OCI-LY7 (cell line): ENCODE measurements at regions of chr19 and their contacts with region 1.

Region 1: GRCh38 chr19:46392243-46392801 is 21.0 kb downstream of the CCDC8 start:
- DNase-seq: no peak
- H3K4me3 ChIP-seq: no peak overlapping the region
- H3K27ac ChIP-seq: no peak overlapping the region
- H3K4me1 ChIP-seq: no peaks in the 10 kb centered on the region
- CTCF ChIP-seq: no peak

Region 2: DNA sequence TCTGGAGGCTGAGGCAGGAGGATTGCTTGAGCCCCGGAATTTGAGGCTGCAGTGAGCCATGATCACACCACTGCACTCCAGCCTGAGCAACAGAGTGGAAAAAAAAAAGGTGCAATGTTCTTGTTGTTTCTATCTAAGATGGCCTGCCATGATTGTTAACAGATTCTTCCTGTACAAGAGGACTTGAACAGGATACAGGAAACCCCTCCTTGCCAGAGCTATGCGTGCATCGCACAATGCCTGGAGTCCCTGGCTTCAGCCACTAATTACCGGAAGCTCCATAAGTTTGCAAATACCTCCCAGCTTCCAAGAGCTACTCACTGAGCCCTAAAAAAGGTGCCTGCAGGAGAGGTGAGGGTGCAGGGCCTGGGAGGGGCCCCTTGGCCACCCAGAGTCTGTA is 108.6 kb before region 1 on chr19:
- CTCF ChIA-PET with region 1: no interaction called
- POLR2A ChIA-PET with region 1: no interaction called
- intact Hi-C with region 1: loop called (anchors 2 kb)
- DNase-seq: no peak
- H3K4me3 ChIP-seq: no peak overlapping the region
- H3K27ac ChIP-seq: no peak overlapping the region
- H3K4me1 ChIP-seq: no peaks in the 10 kb centered on the region
- CTCF ChIP-seq: no peak

Region 3: GRCh38 chr19:46346821-46347571 is 45.3 kb before region 1 on chr19 and contains the start of gene PPP5C:
- CTCF ChIA-PET with region 1: no interaction called
- POLR2A ChIA-PET with region 1: no interaction called
- intact Hi-C with region 1: loop called (anchors 2 kb)
- DNase-seq: peak; percentile 96
- H3K4me3 ChIP-seq: peak within 1 kb of the TSS; percentile 100
- H3K27ac ChIP-seq: peak within 1 kb of the TSS; percentile 75
- H3K4me1 ChIP-seq: peaks cover 49% of the 10 kb centered on the region
- CTCF ChIP-seq: peak; percentile 100
- total RNA-seq, gene PPP5C: 110 and 118 TPM in 2 replicates

Region 4: GRCh38 chr19:46487802-46488445 is 95.6 kb after region 1 on chr19:
- CTCF ChIA-PET with region 1: no interaction called
- POLR2A ChIA-PET with region 1: no interaction called
- intact Hi-C with region 1: loop called (anchors 1 kb)
- DNase-seq: peak; percentile 80
- H3K4me3 ChIP-seq: peak overlapping the region; percentile 35
- H3K27ac ChIP-seq: no peak overlapping the region
- H3K4me1 ChIP-seq: peaks cover 29% of the 10 kb centered on the region
- CTCF ChIP-seq: peak; percentile 93

Region 5: GRCh38 chr19:46513461-46514236 is 121.3 kb after region 1 on chr19:
- CTCF ChIA-PET with region 1: no interaction called
- POLR2A ChIA-PET with region 1: no interaction called
- intact Hi-C with region 1: loop called (anchors 1 kb)
- DNase-seq: peak; percentile 85
- H3K4me3 ChIP-seq: no peak overlapping the region
- H3K27ac ChIP-seq: no peak overlapping the region
- H3K4me1 ChIP-seq: peaks cover 4% of the 10 kb centered on the region
- CTCF ChIP-seq: peak; percentile 95